Motor neuron (in vitro differentiated cells): ENCODE measurements at regions of chr21 and their contacts with region 1.

Region 1: DNA sequence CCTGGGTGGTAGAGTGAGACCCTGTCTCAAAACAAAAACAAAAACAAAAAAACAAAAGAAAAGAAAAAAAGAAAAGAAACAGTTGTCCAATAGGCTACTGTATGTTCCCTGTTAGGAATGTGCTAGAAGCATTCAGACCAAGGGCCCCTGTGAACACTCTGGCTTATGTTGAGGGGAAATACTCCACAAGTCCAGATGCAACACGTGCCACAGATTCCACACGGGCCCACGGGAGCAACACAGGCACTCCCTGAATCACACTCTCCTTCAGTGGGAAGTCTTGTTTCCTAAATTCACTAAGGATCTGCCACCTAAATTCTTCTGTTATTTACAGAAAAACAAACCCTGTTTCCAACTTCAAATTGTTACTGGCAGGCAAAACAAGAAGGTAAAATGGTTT is 291.1 kb downstream of the PCP4 start:
- ATAC-seq: no peak
- H3K4me3 ChIP-seq: no peak overlapping the region
- H3K27ac ChIP-seq: no peak overlapping the region
- H3K4me1 ChIP-seq: peaks cover 2 to 4% of the 10 kb centered on the region in 2 donors

Region 2: GRCh38 chr21:40018871-40019475 is 139.4 kb before region 1 on chr21:
- in situ Hi-C with region 1: no loop called
- ATAC-seq: no peak
- H3K4me3 ChIP-seq: no peak overlapping the region
- H3K27ac ChIP-seq: no peak overlapping the region
- H3K4me1 ChIP-seq: peaks cover 9 to 16% of the 10 kb centered on the region in 2 donors

Region 3: GRCh38 chr21:40102682-40103081 is 55.7 kb before region 1 on chr21:
- in situ Hi-C with region 1: no loop called
- ATAC-seq: no peak
- H3K4me3 ChIP-seq: no peak overlapping the region
- H3K27ac ChIP-seq: no peak overlapping the region
- H3K4me1 ChIP-seq: no peaks in the 10 kb centered on the region

Region 4: GRCh38 chr21:40385892-40386599 is 227.7 kb after region 1 on chr21:
- in situ Hi-C with region 1: loop called in 1 of 9 experiments (anchors 10 kb)
- ATAC-seq: peak; percentile 78 to 97 (median 86)
- H3K4me3 ChIP-seq: no peak overlapping the region
- H3K27ac ChIP-seq: no peak overlapping the region
- H3K4me1 ChIP-seq: peaks cover 0 to 8% of the 10 kb centered on the region in 2 donors